GM12878 (cell line): ENCODE measurements at regions of chr1 and their contacts with region 1.

Region 1: GRCh38 chr1:39575191-39576015 is 1.2 kb downstream of the PABPC4 start:
- DNase-seq: no peak
- ATAC-seq: peak; percentile 67
- H3K4me3 ChIP-seq: peak overlapping the region; percentile 92
- H3K27ac ChIP-seq: peak overlapping the region; percentile 79
- H3K4me1 ChIP-seq: peaks cover 8% of the 10 kb centered on the region; the same call in 1 of the 2 replicates
- H3K27me3 ChIP-seq: no peaks in the 10 kb centered on the region
- CTCF ChIP-seq: no peak
- EP300 ChIP-seq: no peak
- POLR2A ChIP-seq: peak; percentile 58; the same call in 1 of the 2 replicates
- RAD21 ChIP-seq: no peak

Region 2: GRCh38 chr1:39561279-39561678 is 14.1 kb before region 1 on chr1:
- CTCF ChIA-PET with region 1: interaction called, 13 read pairs
- POLR2A ChIA-PET with region 1: interaction called, 5 read pairs
- RAD21 ChIA-PET with region 1: no interaction called
- SMC1A ChIA-PET with region 1: no interaction called
- in situ Hi-C with region 1: no loop called
- intact Hi-C with region 1: no loop called
- DNase-seq: no peak
- ATAC-seq: no peak
- H3K4me3 ChIP-seq: no peak overlapping the region
- H3K27ac ChIP-seq: no peak overlapping the region
- H3K4me1 ChIP-seq: no peaks in the 10 kb centered on the region
- H3K27me3 ChIP-seq: no peaks in the 10 kb centered on the region
- CTCF ChIP-seq: no peak
- EP300 ChIP-seq: no peak
- POLR2A ChIP-seq: no peak
- RAD21 ChIP-seq: no peak

Region 3: GRCh38 chr1:39596163-39596562 is 20.8 kb after region 1 on chr1:
- CTCF ChIA-PET with region 1: interaction called, 3 read pairs
- POLR2A ChIA-PET with region 1: no interaction called
- RAD21 ChIA-PET with region 1: no interaction called
- SMC1A ChIA-PET with region 1: no interaction called
- in situ Hi-C with region 1: no loop called
- intact Hi-C with region 1: loop called (anchors 2 kb)
- DNase-seq: no peak
- ATAC-seq: no peak
- H3K4me3 ChIP-seq: no peak overlapping the region
- H3K27ac ChIP-seq: no peak overlapping the region
- H3K4me1 ChIP-seq: peaks cover 26% of the 10 kb centered on the region
- H3K27me3 ChIP-seq: no peaks in the 10 kb centered on the region; a peak in 1 of 4 replicates
- CTCF ChIP-seq: no peak
- EP300 ChIP-seq: no peak
- POLR2A ChIP-seq: no peak
- RAD21 ChIP-seq: no peak